ENCODE measurements at regions of chr18 and their contacts with region 1.

Region 1: GRCh38 chr18:24014062-24014985 is at the start of gene TTC39C:
- DNase-seq: peak; percentile 81
- ATAC-seq: peak; percentile 63
- H3K4me3 ChIP-seq: peak within 1 kb of the TSS; percentile 77 to 85 (median 78)
- H3K4me3 Mint-ChIP-seq: peak within 1 kb of the TSS; percentile 91
- H3K27ac ChIP-seq: peak within 1 kb of the TSS; percentile 78 to 80
- H3K27ac Mint-ChIP-seq: peak within 1 kb of the TSS; percentile 85
- H3K4me1 ChIP-seq: peaks cover 72 to 85% of the 10 kb centered on the region in 2 donors
- H3K4me1 Mint-ChIP-seq: peaks cover 76% of the 10 kb centered on the region
- H3K27me3 ChIP-seq: no peaks in the 10 kb centered on the region
- H3K27me3 Mint-ChIP-seq: no peaks in the 10 kb centered on the region
- CTCF ChIP-seq: no peak
- total RNA-seq, gene TTC39C: 44.3 and 52.9 TPM in 2 replicates

Region 2: DNA sequence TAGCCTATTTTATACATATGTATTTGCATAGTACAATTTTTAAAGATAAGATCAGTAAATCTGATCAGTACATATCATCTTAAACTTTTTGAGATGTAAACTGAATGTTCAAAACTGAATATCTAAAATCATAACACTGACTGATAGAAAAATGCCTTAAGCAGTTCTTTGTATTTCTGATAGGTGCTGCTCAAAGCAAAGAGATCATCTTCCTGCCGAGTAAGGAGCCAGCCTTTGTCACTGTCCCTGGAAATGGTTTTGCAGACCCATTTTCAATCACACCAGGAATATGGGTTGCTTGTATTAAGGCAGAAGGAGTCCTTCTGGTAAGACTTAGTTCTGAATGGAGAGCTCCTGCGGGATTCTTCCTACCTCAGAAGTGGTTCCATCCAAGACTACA is 190.1 kb before region 1 on chr18:
- CTCF ChIA-PET with region 1: no interaction called
- POLR2A ChIA-PET with region 1: no interaction called
- intact Hi-C with region 1: loop called (anchors 5 kb)
- DNase-seq: no peak
- ATAC-seq: no peak
- H3K4me3 ChIP-seq: no peak overlapping the region
- H3K4me3 Mint-ChIP-seq: no peak overlapping the region
- H3K27ac ChIP-seq: no peak overlapping the region
- H3K27ac Mint-ChIP-seq: no peak overlapping the region
- H3K4me1 ChIP-seq: no peaks in the 10 kb centered on the region
- H3K4me1 Mint-ChIP-seq: peaks cover 2% of the 10 kb centered on the region
- H3K27me3 ChIP-seq: no peaks in the 10 kb centered on the region
- H3K27me3 Mint-ChIP-seq: peaks cover 9% of the 10 kb centered on the region
- CTCF ChIP-seq: no peak

Region 3: DNA sequence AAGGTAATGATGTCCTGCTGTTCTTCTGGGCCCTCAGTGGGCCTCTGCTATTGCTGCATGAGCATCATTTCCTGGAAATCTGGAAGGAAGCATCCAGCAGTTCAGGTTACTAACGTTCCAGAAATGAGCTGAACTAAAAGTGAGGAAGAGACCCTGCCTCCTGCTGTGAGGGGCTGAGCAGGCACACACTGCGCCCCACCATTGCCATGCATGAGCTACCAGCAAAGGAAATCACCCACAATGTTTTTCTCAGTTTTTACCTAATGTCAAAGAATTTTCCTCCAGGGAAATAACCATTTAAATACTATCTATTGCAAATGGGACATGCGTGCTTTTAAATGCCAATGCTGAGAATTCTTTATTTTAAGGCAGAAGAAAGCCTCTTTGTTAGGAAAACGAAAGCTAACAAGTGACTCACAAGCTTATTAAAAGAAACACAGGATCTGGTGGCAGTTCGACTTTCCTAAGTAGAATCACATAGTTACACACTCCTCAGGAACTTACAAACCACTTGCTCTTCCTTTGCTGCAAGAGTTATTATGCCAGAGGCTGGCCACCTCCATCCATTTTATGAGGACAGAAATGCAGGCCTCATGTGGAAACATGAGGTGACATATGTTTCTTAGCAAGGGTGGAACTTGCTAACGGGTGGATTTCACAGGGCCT is 152.4 kb before region 1 on chr18:
- CTCF ChIA-PET with region 1: no interaction called
- POLR2A ChIA-PET with region 1: no interaction called
- intact Hi-C with region 1: loop called (anchors 10 kb)
- DNase-seq: no peak
- ATAC-seq: no peak
- H3K4me3 ChIP-seq: no peak overlapping the region
- H3K4me3 Mint-ChIP-seq: no peak overlapping the region
- H3K27ac ChIP-seq: peak overlapping the region; percentile 33 to 67
- H3K27ac Mint-ChIP-seq: peak overlapping the region; percentile 79
- H3K4me1 ChIP-seq: peaks cover 64 to 69% of the 10 kb centered on the region in 2 donors
- H3K4me1 Mint-ChIP-seq: peaks cover 61% of the 10 kb centered on the region
- H3K27me3 ChIP-seq: no peaks in the 10 kb centered on the region
- H3K27me3 Mint-ChIP-seq: no peaks in the 10 kb centered on the region
- CTCF ChIP-seq: no peak

Region 4: DNA sequence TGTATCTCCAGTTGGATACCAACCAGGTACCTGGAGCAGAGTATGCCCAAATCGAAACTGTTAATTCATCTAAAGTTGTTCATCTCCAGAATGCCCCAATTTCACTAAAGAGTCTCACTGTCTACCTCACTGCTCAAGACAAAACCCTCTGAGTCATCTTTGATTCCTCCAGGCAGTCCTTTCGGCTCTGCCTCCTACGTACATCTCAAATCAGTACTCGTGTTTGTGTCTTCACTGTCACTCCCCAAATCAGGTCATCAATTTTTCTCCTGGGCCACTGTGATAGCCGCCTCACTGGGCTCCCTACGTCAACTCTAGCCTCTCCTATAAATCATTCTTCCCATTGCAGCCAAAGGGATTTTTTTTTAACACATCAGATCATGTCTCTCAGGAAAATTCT is 41.9 kb before region 1 on chr18:
- CTCF ChIA-PET with region 1: interaction called, 3 read pairs
- POLR2A ChIA-PET with region 1: no interaction called
- intact Hi-C with region 1: loop called (anchors 1 kb)
- DNase-seq: no peak
- ATAC-seq: no peak
- H3K4me3 ChIP-seq: no peak overlapping the region
- H3K4me3 Mint-ChIP-seq: no peak overlapping the region
- H3K27ac ChIP-seq: no peak overlapping the region
- H3K27ac Mint-ChIP-seq: peak overlapping the region; percentile 80
- H3K4me1 ChIP-seq: peaks cover 42 to 46% of the 10 kb centered on the region in 2 donors
- H3K4me1 Mint-ChIP-seq: peaks cover 61% of the 10 kb centered on the region
- H3K27me3 ChIP-seq: no peaks in the 10 kb centered on the region
- H3K27me3 Mint-ChIP-seq: no peaks in the 10 kb centered on the region
- CTCF ChIP-seq: no peak

Region 5: DNA sequence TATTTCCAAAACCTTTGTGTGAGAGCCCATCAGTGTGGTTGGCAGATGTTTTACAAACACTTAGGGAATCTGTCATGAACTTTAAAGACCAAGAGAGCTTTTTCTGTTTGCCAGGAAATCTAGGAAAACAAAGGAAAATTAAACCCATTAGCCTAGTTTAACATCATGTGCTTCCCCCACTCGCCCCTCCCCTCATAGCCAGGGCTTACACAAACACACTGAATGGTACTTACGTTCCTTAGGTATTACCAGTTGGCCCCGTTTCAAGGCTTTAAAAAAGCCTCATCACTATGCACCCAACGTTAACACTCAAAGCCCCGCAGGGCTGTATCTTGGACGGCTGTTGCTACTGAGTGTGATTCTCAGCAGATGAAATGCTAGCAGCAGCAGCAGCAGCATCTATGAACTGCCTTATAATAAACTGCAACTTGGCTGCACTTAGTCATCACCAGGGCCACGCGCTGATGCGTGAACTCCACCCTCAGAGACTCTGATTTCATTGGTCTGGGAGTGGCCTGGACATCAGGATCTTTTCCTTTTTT is 19.9 kb before region 1 on chr18:
- CTCF ChIA-PET with region 1: interaction called, 3 read pairs
- POLR2A ChIA-PET with region 1: interaction called, 9 read pairs
- intact Hi-C with region 1: loop called (anchors 2 kb)
- DNase-seq: no peak
- ATAC-seq: peak; percentile 31
- H3K4me3 ChIP-seq: no peak overlapping the region
- H3K4me3 Mint-ChIP-seq: no peak overlapping the region
- H3K27ac ChIP-seq: no peak overlapping the region
- H3K27ac Mint-ChIP-seq: no peak overlapping the region
- H3K4me1 ChIP-seq: peaks cover 5% of the 10 kb centered on the region in 2 donors
- H3K4me1 Mint-ChIP-seq: peaks cover 7% of the 10 kb centered on the region
- H3K27me3 ChIP-seq: peaks cover 0 to 2% (median 0%) of the 10 kb centered on the region in 4 experiments
- H3K27me3 Mint-ChIP-seq: no peaks in the 10 kb centered on the region
- CTCF ChIP-seq: no peak

Region 6: DNA sequence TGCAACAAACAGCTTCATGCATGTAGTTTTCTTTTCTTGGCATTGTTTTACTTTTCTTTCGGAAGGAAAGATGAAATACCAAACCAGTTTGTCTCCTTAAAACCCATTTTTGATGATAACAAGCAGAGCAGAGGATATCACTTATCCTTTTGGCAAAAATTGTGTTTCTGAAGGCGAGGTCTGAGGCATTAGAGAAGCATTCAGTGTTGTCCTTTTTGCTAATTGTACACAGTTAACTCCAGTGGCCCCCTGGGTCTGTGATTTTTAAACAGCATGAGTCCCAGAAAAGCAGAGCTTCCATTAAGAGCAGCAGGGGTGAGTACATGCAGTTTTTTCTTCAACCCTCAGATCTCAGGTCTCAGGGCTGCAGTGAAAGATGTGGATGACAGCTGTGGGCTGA is 41.6 kb after region 1 on chr18:
- CTCF ChIA-PET with region 1: interaction called, 3 read pairs
- POLR2A ChIA-PET with region 1: no interaction called
- intact Hi-C with region 1: loop called (anchors 5 kb)
- DNase-seq: no peak
- ATAC-seq: no peak
- H3K4me3 ChIP-seq: no peak overlapping the region
- H3K4me3 Mint-ChIP-seq: no peak overlapping the region
- H3K27ac ChIP-seq: no peak overlapping the region
- H3K27ac Mint-ChIP-seq: no peak overlapping the region
- H3K4me1 ChIP-seq: peaks cover 26 to 27% of the 10 kb centered on the region in 2 donors
- H3K4me1 Mint-ChIP-seq: peaks cover 56% of the 10 kb centered on the region
- H3K27me3 ChIP-seq: no peaks in the 10 kb centered on the region
- H3K27me3 Mint-ChIP-seq: no peaks in the 10 kb centered on the region
- CTCF ChIP-seq: no peak

Measured in B cell (primary cell).